PC-9 (cell line): ENCODE measurements at regions of chr13 and their contacts with region 1.

Region 1: DNA sequence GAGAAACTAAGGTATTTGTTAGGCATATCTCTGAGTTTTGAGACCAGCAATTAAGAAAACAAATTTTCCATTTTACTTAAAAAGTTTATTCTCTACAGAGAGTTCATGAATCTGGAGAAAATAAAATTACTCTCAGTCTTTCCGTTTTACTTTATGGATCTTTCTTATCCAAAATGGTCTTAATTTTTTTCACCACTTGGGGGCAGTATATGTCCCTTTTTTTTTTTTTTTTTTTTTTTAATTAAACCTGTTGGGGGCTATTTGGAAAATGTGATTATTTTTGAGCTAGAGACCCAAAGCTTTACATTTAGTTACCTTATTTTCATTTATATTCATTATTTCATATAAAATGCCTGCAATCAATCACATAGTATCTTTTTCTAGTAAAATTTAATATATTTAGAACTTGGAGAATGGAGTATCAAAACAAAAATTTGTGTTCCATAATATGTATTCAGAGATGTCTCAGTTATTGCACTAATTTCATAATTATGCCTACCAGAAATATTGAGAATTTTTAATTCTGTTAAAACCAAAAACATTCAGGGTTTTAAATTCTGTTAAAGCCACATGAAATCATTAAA is 27.1 kb downstream of the PIBF1 start:
- DNase-seq: no peak
- H3K4me3 ChIP-seq: no peak overlapping the region
- H3K27ac ChIP-seq: peak overlapping the region; percentile 38
- H3K4me1 ChIP-seq: peaks cover 10% of the 10 kb centered on the region; the same call in 1 of the 2 replicates
- H3K27me3 ChIP-seq: no peaks in the 10 kb centered on the region
- CTCF ChIP-seq: peak; percentile 84

Region 2: DNA sequence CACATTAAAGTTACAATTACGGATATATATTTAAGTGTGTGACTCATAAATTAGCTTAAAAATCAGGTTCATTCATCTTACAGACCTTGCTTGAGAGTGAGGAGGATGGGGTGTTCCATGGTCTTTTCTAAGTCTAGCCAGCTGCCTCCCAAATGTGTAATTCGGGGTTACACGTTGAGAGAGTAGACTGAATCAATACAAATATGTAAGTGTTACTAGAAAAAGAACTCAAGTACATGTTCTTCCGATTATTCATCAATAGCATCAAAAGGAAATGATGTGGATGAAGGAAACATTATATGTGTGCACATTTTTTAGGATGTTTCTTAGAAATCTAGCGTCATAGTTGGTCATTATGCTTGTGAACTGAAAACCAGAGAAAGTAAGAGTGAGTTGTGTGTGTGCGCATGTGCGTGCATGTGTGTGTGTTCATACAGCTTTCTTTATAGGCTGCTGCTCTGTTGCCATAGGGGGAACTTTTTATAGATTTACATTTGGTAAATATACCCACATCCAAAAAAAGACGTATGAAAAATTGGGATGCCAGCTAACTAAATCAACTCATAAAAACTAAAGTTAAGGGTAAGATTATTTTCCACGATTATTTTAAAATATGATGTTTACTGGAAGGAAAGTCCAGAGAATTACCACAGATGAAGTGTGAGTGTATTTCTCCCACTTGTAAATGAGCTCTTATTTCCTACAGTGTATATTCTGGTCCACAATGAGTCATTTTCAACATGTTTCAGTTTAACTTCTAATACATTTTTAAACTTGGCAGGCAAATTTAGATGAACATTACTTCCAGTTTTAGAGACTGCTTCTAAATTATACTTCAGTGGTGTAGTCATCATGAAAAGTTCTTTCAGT is 55.4 kb after region 1 on chr13:
- CTCF ChIA-PET with region 1: interaction called, 12 read pairs
- POLR2A ChIA-PET with region 1: no interaction called
- intact Hi-C with region 1: no loop called
- DNase-seq: no peak
- H3K4me3 ChIP-seq: no peak overlapping the region
- H3K27ac ChIP-seq: no peak overlapping the region
- H3K4me1 ChIP-seq: no peaks in the 10 kb centered on the region
- H3K27me3 ChIP-seq: no peaks in the 10 kb centered on the region
- CTCF ChIP-seq: no peak